ENCODE measurements at regions of chr9 and their contacts with region 1.

Region 1: GRCh38 chr9:130866474-130866965 is 30.1 kb downstream of the QRFP start:
- DNase-seq: peak; percentile 61
- ATAC-seq: peak; percentile 96
- H3K4me3 ChIP-seq: no peak overlapping the region
- H3K27ac ChIP-seq: no peak overlapping the region
- H3K4me1 ChIP-seq: peaks cover 4% of the 10 kb centered on the region
- H3K27me3 ChIP-seq: no peaks in the 10 kb centered on the region
- CTCF ChIP-seq: peak; percentile 92

Region 2: GRCh38 chr9:130693426-130694191 is 172.9 kb before region 1 on chr9 and contains the start of gene EXOSC2:
- CTCF ChIA-PET with region 1: interaction called, 10 read pairs
- POLR2A ChIA-PET with region 1: no interaction called
- in situ Hi-C with region 1: no loop called
- intact Hi-C with region 1: no loop called
- DNase-seq: peak; percentile 87
- ATAC-seq: peak; percentile 96
- H3K4me3 ChIP-seq: peak within 1 kb of the TSS; percentile 83 to 99
- H3K27ac ChIP-seq: peak within 1 kb of the TSS; percentile 97
- H3K4me1 ChIP-seq: no peaks in the 10 kb centered on the region; the same call in 1 of the 2 replicates
- H3K27me3 ChIP-seq: no peaks in the 10 kb centered on the region
- CTCF ChIP-seq: no peak
- total RNA-seq, gene EXOSC2: 41.0 TPM

Region 3: GRCh38 chr9:130707225-130707976 is 159.1 kb before region 1 on chr9:
- CTCF ChIA-PET with region 1: no interaction called
- POLR2A ChIA-PET with region 1: no interaction called
- in situ Hi-C with region 1: no loop called
- intact Hi-C with region 1: loop called (anchors 5 kb)
- DNase-seq: no peak
- ATAC-seq: peak; percentile 83
- H3K4me3 ChIP-seq: no peak overlapping the region
- H3K27ac ChIP-seq: no peak overlapping the region
- H3K4me1 ChIP-seq: 0 out of 2 replicates have a peak, but pooled peaks cover 7% of the 10 kb centered on the region
- H3K27me3 ChIP-seq: no peaks in the 10 kb centered on the region
- CTCF ChIP-seq: peak; percentile 77

Region 4: DNA sequence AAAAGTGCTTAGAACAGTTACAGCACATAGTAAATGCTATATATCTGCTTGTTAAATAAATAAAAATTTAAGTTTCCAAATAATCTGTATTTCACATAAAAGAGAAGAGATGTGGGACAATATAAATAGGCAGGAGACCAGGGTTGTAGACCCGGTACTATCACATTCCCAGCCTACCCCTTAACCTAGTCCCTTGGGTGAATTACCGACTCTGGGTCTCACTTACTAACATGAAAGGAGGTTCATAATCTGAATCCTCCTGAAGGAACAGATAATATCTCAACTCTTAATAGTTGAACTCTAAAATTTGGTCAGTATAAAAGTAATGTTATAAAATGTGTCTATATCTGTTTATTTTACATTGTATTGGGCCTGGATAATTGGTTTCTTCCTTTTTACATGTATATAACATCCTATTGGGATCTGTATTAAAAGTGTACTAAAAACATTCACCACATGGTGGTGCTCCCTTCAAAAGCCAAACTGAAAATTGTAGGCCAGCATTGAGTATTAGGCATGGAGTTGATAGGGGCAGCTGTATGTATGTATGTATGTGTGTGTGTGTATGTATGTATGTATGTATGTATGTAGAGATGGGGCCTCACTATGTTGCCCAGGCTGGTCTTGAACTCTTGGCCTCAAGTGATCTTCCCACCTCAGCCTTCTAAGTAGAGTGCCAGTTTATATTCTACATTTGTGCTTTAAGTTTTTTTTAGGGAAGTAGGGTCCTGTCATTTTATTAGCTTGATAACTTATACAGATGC is 95.7 kb before region 1 on chr9:
- CTCF ChIA-PET with region 1: interaction called, 6 read pairs
- POLR2A ChIA-PET with region 1: no interaction called
- in situ Hi-C with region 1: no loop called
- intact Hi-C with region 1: loop called (anchors 2 kb)
- DNase-seq: peak; percentile 18
- ATAC-seq: peak; percentile 91
- H3K4me3 ChIP-seq: no peak overlapping the region
- H3K27ac ChIP-seq: no peak overlapping the region
- H3K4me1 ChIP-seq: peaks cover 5% of the 10 kb centered on the region; the same call in 1 of the 2 replicates
- H3K27me3 ChIP-seq: no peaks in the 10 kb centered on the region
- CTCF ChIP-seq: peak; percentile 72

Region 5: DNA sequence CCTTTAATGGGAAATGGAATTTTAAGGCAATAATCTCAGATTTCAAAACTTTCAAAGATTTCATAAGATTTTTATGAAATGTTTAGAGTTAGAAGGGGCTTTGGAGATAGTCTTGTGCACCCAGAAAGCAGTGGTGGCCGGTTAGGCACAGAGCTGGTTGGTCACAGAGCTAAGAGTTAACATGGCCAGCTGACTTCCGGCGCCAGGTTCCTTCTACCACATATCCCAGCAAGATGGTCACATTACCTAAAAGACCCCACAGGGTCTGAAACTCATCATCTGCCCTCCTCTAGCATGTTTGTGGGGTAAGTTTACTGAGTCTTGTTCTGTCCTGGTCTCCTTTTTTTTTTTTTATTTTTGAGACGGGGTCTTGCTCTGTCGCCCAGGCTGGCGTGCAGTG is 10.8 kb after region 1 on chr9:
- CTCF ChIA-PET with region 1: interaction called, 10 read pairs
- POLR2A ChIA-PET with region 1: no interaction called
- in situ Hi-C with region 1: no loop called
- intact Hi-C with region 1: no loop called
- DNase-seq: no peak
- ATAC-seq: no peak
- H3K4me3 ChIP-seq: no peak overlapping the region
- H3K27ac ChIP-seq: no peak overlapping the region
- H3K4me1 ChIP-seq: no peaks in the 10 kb centered on the region
- H3K27me3 ChIP-seq: no peaks in the 10 kb centered on the region
- CTCF ChIP-seq: no peak

Region 6: DNA sequence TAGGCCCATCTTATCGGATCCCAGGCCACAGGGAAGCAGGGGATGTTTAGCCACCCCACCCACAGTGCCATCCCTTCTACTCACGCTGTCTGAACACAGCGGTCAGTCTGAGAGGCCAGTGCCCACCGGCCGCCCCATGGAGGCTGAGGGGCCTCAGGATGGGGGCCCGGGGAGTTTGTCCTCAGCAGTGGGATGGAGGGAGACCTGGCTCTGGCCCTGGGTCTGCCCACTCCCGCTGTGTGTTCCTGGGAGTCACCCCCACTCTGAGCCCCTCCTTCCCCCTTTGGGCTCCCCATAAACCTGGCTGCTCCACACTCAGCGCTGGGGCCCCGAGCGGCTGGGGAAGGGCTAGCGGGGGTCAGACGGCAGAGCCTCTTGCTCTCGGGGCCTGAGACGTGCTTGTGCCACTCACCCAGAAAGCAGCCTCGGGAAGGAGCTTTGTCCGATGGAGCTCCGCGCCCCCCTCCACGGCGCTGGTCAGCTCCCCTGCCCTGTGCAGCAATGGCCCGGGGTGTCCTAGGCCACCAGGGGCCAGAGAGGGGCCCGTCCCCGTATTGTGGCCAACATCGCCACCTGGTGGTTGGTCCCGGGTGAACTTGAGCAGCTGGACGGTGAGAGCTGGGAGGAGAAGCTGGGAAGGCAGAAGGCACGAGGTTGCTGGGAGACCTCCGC is 131.5 kb after region 1 on chr9:
- CTCF ChIA-PET with region 1: interaction called, 4 read pairs
- POLR2A ChIA-PET with region 1: no interaction called
- in situ Hi-C with region 1: no loop called
- intact Hi-C with region 1: loop called (anchors 5 kb)
- DNase-seq: no peak
- ATAC-seq: peak; percentile 95
- H3K4me3 ChIP-seq: no peak overlapping the region
- H3K27ac ChIP-seq: no peak overlapping the region
- H3K4me1 ChIP-seq: peaks cover 3% of the 10 kb centered on the region; the same call in 1 of the 2 replicates
- H3K27me3 ChIP-seq: no peaks in the 10 kb centered on the region
- CTCF ChIP-seq: peak; percentile 81

Region 7: GRCh38 chr9:131046581-131047202 is 180.2 kb after region 1 on chr9:
- CTCF ChIA-PET with region 1: interaction called, 10 read pairs
- POLR2A ChIA-PET with region 1: no interaction called
- in situ Hi-C with region 1: no loop called
- intact Hi-C with region 1: no loop called
- DNase-seq: no peak
- ATAC-seq: peak; percentile 91
- H3K4me3 ChIP-seq: no peak overlapping the region
- H3K27ac ChIP-seq: no peak overlapping the region
- H3K4me1 ChIP-seq: no peaks in the 10 kb centered on the region
- H3K27me3 ChIP-seq: no peaks in the 10 kb centered on the region
- CTCF ChIP-seq: peak; percentile 92

Measured in Panc1 (cell line).